ENCODE measurements at regions of chr10 and their contacts with region 1.

Region 1: GRCh38 chr10:103192451-103193106 is 493 bp downstream of the NT5C2 start:
- DNase-seq: peak; percentile 56
- ATAC-seq: peak; percentile 49
- H3K4me3 ChIP-seq: peak overlapping the region; percentile 99
- H3K27ac ChIP-seq: peak overlapping the region; percentile 76
- H3K4me1 ChIP-seq: peaks cover 48% of the 10 kb centered on the region
- H3K27me3 ChIP-seq: no peaks in the 10 kb centered on the region
- CTCF ChIP-seq: no peak

Region 2: GRCh38 chr10:103232772-103233488 is 40.4 kb after region 1 on chr10:
- CTCF ChIA-PET with region 1: interaction called, 4 read pairs
- POLR2A ChIA-PET with region 1: interaction called, 9 read pairs
- intact Hi-C with region 1: loop called (anchors 1 kb)
- DNase-seq: peak; percentile 89
- ATAC-seq: peak; percentile 60
- H3K4me3 ChIP-seq: no peak overlapping the region
- H3K27ac ChIP-seq: peak overlapping the region; percentile 88
- H3K4me1 ChIP-seq: peaks cover 43% of the 10 kb centered on the region
- H3K27me3 ChIP-seq: no peaks in the 10 kb centered on the region
- CTCF ChIP-seq: no peak

Measured in PC-3 (cell line).